CD4-positive, alpha-beta T cell (primary cell): ENCODE measurements at regions of chr6 and their contacts with region 1.

Region 1: DNA sequence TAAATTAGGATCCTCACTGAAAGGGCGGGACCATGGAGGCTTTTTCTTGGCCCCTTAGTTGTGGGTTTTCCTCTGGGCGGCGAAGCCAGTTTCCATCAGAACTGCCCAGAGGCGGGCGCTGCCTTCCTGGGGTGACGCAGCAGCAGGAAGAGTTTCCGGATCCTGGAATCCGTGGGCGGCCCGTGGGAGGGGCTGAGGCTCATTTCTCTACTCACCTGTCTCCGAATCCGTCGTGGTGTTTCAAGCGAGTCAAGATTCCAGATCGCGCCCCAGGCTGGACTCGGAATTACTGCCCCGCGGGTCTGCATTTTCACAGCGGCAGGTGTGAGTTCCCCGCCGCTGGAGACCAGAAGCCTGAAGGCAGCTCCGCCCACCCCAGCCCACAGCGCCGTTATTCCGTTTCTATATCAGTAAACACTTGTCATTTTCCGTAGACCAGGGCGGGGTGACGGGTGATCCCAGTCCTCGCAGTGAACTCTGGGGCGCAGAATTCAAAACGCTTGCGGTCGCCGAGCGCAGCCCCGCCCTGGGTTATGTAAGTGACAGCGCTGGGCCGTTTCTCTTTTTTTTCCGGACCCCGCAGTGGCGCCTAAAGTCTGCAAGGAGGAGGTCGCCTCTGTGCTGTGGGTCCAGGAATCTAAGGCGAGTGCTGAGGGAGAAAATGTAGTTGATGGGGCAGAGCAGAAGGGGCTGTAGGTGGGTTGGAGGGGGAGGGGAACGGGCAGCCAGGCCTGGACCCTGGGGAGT is 27.2 kb upstream of the POU5F1 start:
- DNase-seq: peak; percentile 91 to 98 (median 92)
- ATAC-seq: peak; percentile 76
- H3K4me3 ChIP-seq: peak overlapping the region; percentile 71
- H3K4me3 Mint-ChIP-seq: peak overlapping the region; percentile 97
- H3K27ac ChIP-seq: peak overlapping the region; percentile 97 to 100
- H3K27ac Mint-ChIP-seq: peak overlapping the region; percentile 93
- H3K4me1 ChIP-seq: peaks cover 60% of the 10 kb centered on the region
- H3K4me1 Mint-ChIP-seq: peaks cover 65% of the 10 kb centered on the region
- H3K27me3 ChIP-seq: no peaks in the 10 kb centered on the region
- H3K27me3 Mint-ChIP-seq: no peaks in the 10 kb centered on the region
- CTCF ChIP-seq: no peak

Region 2: DNA sequence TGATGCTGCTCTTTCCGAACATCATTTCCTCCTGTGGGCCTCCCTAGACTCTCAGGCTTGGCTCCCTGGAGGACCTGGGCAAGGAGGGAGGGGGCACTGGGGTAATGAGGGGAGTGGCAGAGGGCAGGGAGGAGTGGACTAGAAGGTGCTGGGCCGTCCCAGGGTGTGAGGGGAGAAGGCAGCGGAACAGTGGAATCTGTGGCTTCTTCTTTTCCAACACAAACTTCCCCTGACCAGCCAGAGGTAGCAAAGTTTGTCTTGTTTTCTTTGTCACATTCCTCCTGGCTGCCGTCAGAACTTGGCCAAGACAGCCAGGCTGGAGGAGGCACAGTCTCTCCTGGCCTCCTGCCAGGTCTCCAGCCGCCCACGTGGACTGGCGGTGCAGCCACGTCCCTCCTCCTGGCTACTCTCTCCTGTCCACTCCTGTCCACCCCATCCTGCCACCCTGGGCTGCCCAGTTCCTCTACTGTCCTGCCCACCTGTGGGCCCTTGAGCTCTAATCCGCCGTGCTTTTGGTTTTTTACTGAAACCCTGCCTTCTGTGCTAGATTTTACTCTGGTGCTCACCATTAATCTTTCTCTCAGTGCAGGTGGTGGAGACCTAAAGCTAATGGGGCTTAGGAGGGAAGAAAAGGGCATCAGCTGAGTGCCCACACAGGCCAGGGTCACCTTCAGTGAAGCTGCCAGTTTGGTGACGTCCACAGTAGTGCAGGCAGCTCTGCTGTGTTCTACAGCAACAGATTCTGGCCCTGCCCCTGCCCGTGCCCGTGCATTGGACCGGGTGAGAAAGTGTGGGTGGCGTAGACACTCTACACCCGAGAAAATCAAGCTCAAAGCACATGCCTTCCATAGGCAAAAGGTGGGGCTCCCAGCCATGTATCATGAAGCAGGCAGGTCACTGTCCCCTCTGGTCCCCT is 74.7 kb before region 1 on chr6:
- CTCF ChIA-PET with region 1: no interaction called
- POLR2A ChIA-PET with region 1: no interaction called
- intact Hi-C with region 1: no loop called
- DNase-seq: no peak
- ATAC-seq: no peak
- H3K4me3 ChIP-seq: no peak overlapping the region
- H3K4me3 Mint-ChIP-seq: no peak overlapping the region
- H3K27ac ChIP-seq: no peak overlapping the region
- H3K27ac Mint-ChIP-seq: no peak overlapping the region
- H3K4me1 ChIP-seq: peaks cover 4% of the 10 kb centered on the region
- H3K4me1 Mint-ChIP-seq: peaks cover 3% of the 10 kb centered on the region
- H3K27me3 ChIP-seq: no peaks in the 10 kb centered on the region
- H3K27me3 Mint-ChIP-seq: peaks cover 3% of the 10 kb centered on the region
- CTCF ChIP-seq: no peak

Region 3: DNA sequence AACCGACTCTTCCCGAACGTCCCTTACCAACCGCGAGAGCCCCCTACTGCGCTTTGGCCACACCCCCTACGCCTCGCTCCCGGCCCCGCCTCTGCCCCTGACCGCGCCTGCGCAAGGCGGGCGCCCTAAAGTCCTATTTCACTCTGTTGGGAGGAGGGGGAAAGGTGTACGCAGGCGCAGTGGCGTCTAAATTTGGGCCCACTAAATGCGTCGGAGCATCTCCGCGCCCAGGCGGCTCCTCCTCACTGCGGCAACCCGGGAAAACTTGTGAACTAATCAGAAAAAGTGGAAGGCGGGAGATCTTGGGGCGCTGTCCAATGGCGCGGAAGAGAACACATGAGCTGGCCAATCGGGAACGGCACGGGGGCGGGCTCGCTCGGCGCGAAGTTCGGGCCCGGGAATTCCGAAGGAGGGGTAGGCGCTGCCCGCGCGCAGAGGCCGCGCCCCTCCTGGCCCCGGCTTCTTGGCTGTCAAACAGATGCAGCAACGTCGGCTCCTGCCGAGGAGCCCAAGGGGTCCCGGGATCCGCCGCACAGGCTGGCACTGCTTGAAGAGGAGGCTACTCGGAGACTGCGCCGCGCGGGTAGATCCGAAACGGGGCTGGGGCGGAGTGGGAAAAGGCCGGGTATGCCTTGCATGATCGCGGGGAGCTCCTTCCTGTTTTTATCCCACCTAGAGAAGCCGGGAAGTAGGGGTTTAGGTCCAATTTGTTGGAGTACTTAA is 39.4 kb before region 1 on chr6 and contains the start of gene TCF19:
- CTCF ChIA-PET with region 1: interaction called, 4 read pairs
- POLR2A ChIA-PET with region 1: interaction called, 16 read pairs
- intact Hi-C with region 1: loop called in 1 of 2 experiments (anchors 5 kb)
- DNase-seq: peak; percentile 98 to 100 (median 99)
- ATAC-seq: peak; percentile 90
- H3K4me3 ChIP-seq: peak within 1 kb of the TSS; percentile 96
- H3K4me3 Mint-ChIP-seq: peak within 1 kb of the TSS; percentile 97
- H3K27ac ChIP-seq: peak within 1 kb of the TSS; percentile 38 to 40
- H3K27ac Mint-ChIP-seq: peak within 1 kb of the TSS; percentile 77
- H3K4me1 ChIP-seq: peaks cover 26% of the 10 kb centered on the region
- H3K4me1 Mint-ChIP-seq: peaks cover 33% of the 10 kb centered on the region
- H3K27me3 ChIP-seq: no peaks in the 10 kb centered on the region
- H3K27me3 Mint-ChIP-seq: no peaks in the 10 kb centered on the region
- CTCF ChIP-seq: no peak
- total RNA-seq, gene TCF19: 3.3 to 4.1 TPM

Region 4: GRCh38 chr6:31265926-31266325 is 68.2 kb after region 1 on chr6:
- CTCF ChIA-PET with region 1: interaction called, 4 read pairs
- POLR2A ChIA-PET with region 1: interaction called, 97 read pairs
- intact Hi-C with region 1: no loop called
- DNase-seq: peak in 2 of 14 experiments; percentile 4 to 25
- ATAC-seq: peak; percentile 7
- H3K4me3 ChIP-seq: no peak overlapping the region
- H3K4me3 Mint-ChIP-seq: peak overlapping the region; percentile 22
- H3K27ac ChIP-seq: no peak overlapping the region
- H3K27ac Mint-ChIP-seq: peak overlapping the region; percentile 62
- H3K4me1 ChIP-seq: peaks cover 37% of the 10 kb centered on the region
- H3K4me1 Mint-ChIP-seq: peaks cover 62% of the 10 kb centered on the region
- H3K27me3 ChIP-seq: no peaks in the 10 kb centered on the region
- H3K27me3 Mint-ChIP-seq: no peaks in the 10 kb centered on the region
- CTCF ChIP-seq: no peak

Region 5: GRCh38 chr6:31308050-31308844 is 110.5 kb after region 1 on chr6:
- CTCF ChIA-PET with region 1: interaction called, 3 read pairs
- POLR2A ChIA-PET with region 1: interaction called, 28 read pairs
- intact Hi-C with region 1: no loop called
- DNase-seq: peak; percentile 58 to 90 (median 68)
- ATAC-seq: peak; percentile 95
- H3K4me3 ChIP-seq: peak overlapping the region; percentile 73
- H3K4me3 Mint-ChIP-seq: peak overlapping the region; percentile 95
- H3K27ac ChIP-seq: no peak overlapping the region
- H3K27ac Mint-ChIP-seq: peak overlapping the region; percentile 76
- H3K4me1 ChIP-seq: peaks cover 18% of the 10 kb centered on the region
- H3K4me1 Mint-ChIP-seq: no peaks in the 10 kb centered on the region
- H3K27me3 ChIP-seq: peaks cover 0 to 3% of the 10 kb centered on the region in 2 experiments
- H3K27me3 Mint-ChIP-seq: peaks cover 14% of the 10 kb centered on the region
- CTCF ChIP-seq: no peak

Region 6: GRCh38 chr6:31356946-31357466 is 159.3 kb after region 1 on chr6 and contains the start of gene HLA-B:
- CTCF ChIA-PET with region 1: interaction called, 7 read pairs
- POLR2A ChIA-PET with region 1: interaction called, 52 read pairs
- intact Hi-C with region 1: loop called (anchors 1 to 2 kb)
- DNase-seq: peak; percentile 67 to 99 (median 76)
- ATAC-seq: peak; percentile 84
- H3K4me3 ChIP-seq: peak within 1 kb of the TSS; percentile 76
- H3K4me3 Mint-ChIP-seq: peak within 1 kb of the TSS; percentile 100
- H3K27ac ChIP-seq: peak within 1 kb of the TSS; percentile 97 to 99
- H3K27ac Mint-ChIP-seq: peak within 1 kb of the TSS; percentile 100
- H3K4me1 ChIP-seq: peaks cover 50% of the 10 kb centered on the region
- H3K4me1 Mint-ChIP-seq: peaks cover 71% of the 10 kb centered on the region
- H3K27me3 ChIP-seq: no peaks in the 10 kb centered on the region
- H3K27me3 Mint-ChIP-seq: peaks cover 5% of the 10 kb centered on the region
- CTCF ChIP-seq: no peak
- total RNA-seq, gene HLA-B: 6,758 to 7,013 TPM

Region 7: DNA sequence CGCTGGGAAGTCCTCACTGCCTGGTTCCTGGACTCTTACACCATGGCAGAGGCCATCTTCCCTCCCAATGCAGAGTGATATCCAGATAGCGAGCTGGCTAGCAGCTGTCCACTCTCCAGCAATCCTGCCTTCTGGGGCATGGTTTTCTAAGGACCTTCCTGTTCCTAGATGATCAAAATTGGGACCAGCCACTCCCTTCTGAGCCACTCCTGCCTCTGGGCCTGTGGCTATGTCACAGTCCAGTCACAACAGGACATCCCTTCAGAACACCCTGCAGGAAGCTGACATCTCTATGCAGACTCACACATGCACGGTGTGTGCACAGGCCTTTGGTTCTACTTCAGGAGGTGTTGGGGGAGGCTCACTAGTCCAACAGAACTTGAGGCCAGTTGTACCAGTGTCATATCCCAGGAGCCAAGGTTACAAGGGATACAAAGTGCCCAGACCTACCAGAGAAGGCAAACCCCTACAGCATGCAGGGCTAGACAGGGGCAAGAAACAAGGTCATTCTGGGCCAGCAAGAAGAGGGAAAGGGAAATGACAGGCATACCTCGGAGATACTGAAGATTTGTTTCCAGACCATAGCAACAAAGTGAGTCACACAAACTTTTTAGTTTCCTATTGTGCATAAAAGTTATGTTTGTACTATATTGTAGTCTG is 328.3 kb after region 1 on chr6:
- CTCF ChIA-PET with region 1: no interaction called
- POLR2A ChIA-PET with region 1: no interaction called
- intact Hi-C with region 1: no loop called
- DNase-seq: no peak
- ATAC-seq: no peak
- H3K4me3 ChIP-seq: no peak overlapping the region
- H3K4me3 Mint-ChIP-seq: no peak overlapping the region
- H3K27ac ChIP-seq: no peak overlapping the region
- H3K27ac Mint-ChIP-seq: no peak overlapping the region
- H3K4me1 ChIP-seq: no peaks in the 10 kb centered on the region
- H3K4me1 Mint-ChIP-seq: no peaks in the 10 kb centered on the region
- H3K27me3 ChIP-seq: no peaks in the 10 kb centered on the region
- H3K27me3 Mint-ChIP-seq: no peaks in the 10 kb centered on the region
- CTCF ChIP-seq: no peak

Region 8: GRCh38 chr6:31588871-31589650 is 391.3 kb after region 1 on chr6:
- CTCF ChIA-PET with region 1: no interaction called
- POLR2A ChIA-PET with region 1: no interaction called
- intact Hi-C with region 1: no loop called
- DNase-seq: no peak
- ATAC-seq: no peak
- H3K4me3 ChIP-seq: no peak overlapping the region
- H3K4me3 Mint-ChIP-seq: peak overlapping the region; percentile 23
- H3K27ac ChIP-seq: no peak overlapping the region
- H3K27ac Mint-ChIP-seq: peak overlapping the region; percentile 85
- H3K4me1 ChIP-seq: peaks cover 81% of the 10 kb centered on the region
- H3K4me1 Mint-ChIP-seq: peaks cover 74% of the 10 kb centered on the region
- H3K27me3 ChIP-seq: no peaks in the 10 kb centered on the region
- H3K27me3 Mint-ChIP-seq: no peaks in the 10 kb centered on the region
- CTCF ChIP-seq: no peak